Motor neuron (in vitro differentiated cells): ENCODE measurements at regions of chr4 and their contacts with region 1.

Region 1: GRCh38 chr4:15956179-15956850 is 6.7 kb downstream of the FGFBP2 start:
- ATAC-seq: peak in 3 of 8 experiments; percentile 51 to 88 (median 69)
- H3K4me3 ChIP-seq: no peak overlapping the region
- H3K27ac ChIP-seq: no peak overlapping the region
- H3K4me1 ChIP-seq: no peaks in the 10 kb centered on the region

Region 2: DNA sequence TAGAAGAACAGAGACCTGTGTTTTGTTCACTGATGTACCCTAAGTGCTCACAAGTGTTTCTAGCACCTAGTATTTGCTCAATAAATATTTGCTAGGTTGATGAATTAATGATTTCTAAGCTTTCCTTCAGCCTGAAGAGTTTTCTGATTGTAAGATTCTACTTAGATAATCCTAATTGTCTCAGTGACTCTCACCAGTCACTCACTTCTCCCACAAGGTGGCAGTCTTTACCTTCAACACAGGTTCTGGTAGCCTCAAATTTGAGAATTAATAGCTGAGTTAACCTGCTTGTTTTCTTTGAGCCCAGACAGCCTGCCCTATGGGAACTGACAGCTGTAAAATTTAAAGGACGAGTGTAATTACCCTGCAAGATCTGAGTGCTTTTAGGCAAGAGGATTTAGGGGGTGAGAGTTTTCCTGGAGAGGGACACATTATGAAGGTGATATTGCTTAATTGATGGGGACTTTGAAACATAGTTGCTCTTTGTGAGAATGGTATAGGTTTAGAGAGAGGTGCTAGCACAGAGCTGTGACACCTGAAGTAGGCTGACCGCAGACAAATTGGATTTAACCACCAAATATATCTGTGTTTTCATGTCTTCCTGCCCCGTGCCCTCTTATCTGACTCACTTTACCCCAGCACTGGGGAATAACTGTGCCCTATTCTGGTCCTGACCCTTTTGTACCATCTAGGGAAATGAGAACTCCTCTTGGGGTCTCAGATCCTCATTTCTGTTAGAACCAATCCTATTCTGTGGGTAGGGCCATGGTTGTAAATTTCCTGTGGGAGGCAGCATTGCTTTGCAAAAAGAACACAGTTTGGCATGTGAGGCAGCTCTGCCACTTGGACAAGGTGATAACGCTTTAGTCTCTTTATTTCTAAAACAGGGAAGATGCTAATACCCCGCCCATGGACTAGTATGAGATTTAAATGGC is 150.5 kb before region 1 on chr4:
- in situ Hi-C with region 1: loop called in 2 of 9 experiments (anchors 10 to 25 kb)
- ATAC-seq: peak in 4 of 8 experiments; percentile 53 to 86 (median 84)
- H3K4me3 ChIP-seq: no peak overlapping the region
- H3K27ac ChIP-seq: no peak overlapping the region
- H3K4me1 ChIP-seq: no peaks in the 10 kb centered on the region

Region 3: DNA sequence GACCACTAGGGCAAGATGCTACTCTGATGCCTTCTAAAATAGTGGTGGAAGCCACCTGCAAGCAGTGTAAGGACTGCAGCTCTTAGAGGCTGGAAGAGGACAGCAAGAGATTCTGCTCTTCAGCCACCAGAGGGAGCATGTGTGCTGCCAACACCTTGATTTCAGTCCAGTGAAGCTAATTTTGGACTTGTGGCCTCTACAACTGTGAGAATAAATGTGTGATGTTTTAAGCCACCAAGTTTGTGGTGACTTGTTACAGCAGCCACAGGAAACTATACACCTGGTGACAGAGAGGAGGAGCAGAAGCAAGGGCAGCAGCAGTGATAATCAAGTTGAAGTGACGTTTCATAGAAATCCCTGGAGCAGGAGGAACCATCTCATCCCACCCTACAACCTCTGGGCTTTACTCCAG is 73.6 kb before region 1 on chr4:
- in situ Hi-C with region 1: loop called in 1 of 9 experiments (anchors 10 kb)
- ATAC-seq: peak; percentile 32 to 71 (median 46)
- H3K4me3 ChIP-seq: no peak overlapping the region
- H3K27ac ChIP-seq: no peak overlapping the region
- H3K4me1 ChIP-seq: no peaks in the 10 kb centered on the region

Region 4: GRCh38 chr4:16496501-16496900 is 540.2 kb after region 1 on chr4:
- in situ Hi-C with region 1: no loop called
- ATAC-seq: peak in 3 of 8 experiments; percentile 59 to 88 (median 73)
- H3K4me3 ChIP-seq: no peak overlapping the region
- H3K27ac ChIP-seq: no peak overlapping the region
- H3K4me1 ChIP-seq: no peaks in the 10 kb centered on the region